ENCODE measurements at regions of chr15 and their contacts with region 1.

Region 1: GRCh38 chr15:81274931-81275707 is 48.8 kb downstream of the STARD5 start:
- DNase-seq: peak; percentile 73
- CTCF ChIP-seq: peak; percentile 90

Region 2: DNA sequence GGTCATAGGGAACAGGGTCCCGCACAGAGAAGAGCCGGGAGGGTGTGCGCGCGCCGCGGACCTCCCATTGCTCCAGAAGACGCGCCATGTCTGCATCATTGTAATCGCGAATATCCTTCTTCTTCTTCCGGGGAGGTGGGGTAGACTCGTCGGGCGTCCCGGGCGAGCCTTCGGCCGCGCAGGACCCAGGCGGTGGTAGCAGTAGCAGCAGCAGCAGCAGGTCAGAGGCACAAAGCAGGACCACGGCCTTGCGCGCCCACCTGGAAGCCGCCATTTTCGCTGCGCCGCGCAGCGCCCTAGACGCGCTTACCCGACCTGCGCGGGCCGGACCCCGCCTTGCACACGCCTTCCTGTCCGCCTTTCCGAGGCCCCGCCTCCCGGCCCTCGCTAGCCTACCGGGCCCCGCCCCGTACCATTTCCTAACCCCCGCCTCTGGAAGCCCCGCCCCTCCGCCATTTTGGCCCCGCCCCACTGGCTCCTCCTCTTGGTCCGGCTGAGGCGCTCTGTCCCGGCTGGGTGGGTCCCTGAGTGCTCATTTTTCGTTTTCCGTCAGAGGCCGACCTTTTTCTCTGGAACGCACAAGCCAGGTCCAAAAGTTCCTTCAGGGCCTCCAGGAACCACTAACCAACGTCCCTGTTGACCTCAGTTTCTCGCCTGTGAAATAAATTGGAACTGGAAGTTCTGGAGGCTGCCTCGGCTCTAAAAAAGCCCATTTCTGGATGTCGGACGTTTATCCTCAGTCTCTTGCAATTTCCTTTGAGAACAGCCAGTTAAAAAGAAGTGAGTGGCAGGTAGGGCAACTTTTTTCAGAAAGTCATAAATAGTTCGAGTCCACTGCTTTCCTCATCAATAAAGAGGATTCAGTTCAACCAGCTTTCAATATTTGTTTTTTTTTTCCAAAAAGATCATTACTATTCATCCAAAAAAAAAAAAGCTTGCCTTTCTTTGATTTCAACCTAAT is 285.3 kb before region 1 on chr15 and contains the start of gene MESD:
- in situ Hi-C with region 1: loop called (anchors 25 kb)
- DNase-seq: peak; percentile 97
- CTCF ChIP-seq: no peak

Region 3: GRCh38 chr15:81336568-81336967 is 61.4 kb after region 1 on chr15:
- in situ Hi-C with region 1: loop called (anchors 5 kb)
- DNase-seq: peak; percentile 39
- CTCF ChIP-seq: peak; percentile 51

Region 4: GRCh38 chr15:81612630-81613029 is 337.5 kb after region 1 on chr15:
- in situ Hi-C with region 1: no loop called
- DNase-seq: no peak
- CTCF ChIP-seq: no peak

Region 5: DNA sequence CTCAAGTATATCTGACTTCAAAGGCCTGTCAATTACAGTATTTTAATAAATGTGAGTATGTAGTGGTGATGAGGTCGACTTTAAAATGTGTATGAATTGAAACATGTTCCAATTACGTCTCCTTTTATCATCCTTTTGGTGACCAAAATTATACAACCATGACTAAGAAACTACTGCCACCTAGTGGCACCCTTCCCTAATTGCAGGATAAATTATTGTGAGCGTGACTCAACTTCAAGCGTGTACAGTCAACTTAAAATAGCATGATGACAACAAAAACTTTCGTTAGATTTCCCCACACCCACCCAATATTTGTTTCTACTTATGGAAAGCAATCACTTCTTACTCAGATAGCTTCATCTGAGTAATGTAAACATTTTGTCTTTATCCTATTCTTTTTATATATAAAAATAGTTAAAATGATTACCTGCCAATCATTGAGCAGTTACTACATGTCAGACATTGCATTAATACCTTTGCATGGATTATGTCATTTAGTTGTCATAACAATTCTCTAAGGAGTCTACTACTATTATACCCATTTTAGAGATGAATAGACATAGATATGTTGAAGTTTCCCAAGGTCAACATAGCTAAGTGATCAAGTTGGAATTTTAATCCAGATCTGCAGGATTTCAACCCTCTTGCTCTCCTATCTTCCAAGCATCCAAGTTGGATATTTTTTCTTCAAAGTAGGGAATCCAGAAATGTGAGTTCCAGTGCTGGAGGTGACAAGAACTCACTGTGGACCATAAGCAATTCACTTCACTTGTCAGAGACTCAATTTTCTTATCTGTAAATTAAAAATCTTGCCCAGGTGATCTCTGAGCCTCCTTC is 664.7 kb after region 1 on chr15:
- in situ Hi-C with region 1: loop called (anchors 25 kb)
- DNase-seq: peak; percentile 48
- CTCF ChIP-seq: peak; percentile 74